Heart right ventricle (tissue), 16 donors: ENCODE measurements at regions of chr3 and their contacts with region 1.

Region 1: GRCh38 chr3:138426226-138426625 is 8.2 kb upstream of the ESYT3 start:
- DNase-seq: no peak
- ATAC-seq: peak in 2 of 8 donors; percentile 33 to 61
- H3K4me3 ChIP-seq: no peak overlapping the region
- H3K27ac ChIP-seq: no peak overlapping the region
- H3K4me1 ChIP-seq: no peaks in the 10 kb centered on the region
- H3K27me3 ChIP-seq: peaks cover 0 to 7% (median 0%) of the 10 kb centered on the region in 7 donors
- CTCF ChIP-seq: peak in 8 of 9 donors; percentile 23 to 63 (median 53)

Region 2: DNA sequence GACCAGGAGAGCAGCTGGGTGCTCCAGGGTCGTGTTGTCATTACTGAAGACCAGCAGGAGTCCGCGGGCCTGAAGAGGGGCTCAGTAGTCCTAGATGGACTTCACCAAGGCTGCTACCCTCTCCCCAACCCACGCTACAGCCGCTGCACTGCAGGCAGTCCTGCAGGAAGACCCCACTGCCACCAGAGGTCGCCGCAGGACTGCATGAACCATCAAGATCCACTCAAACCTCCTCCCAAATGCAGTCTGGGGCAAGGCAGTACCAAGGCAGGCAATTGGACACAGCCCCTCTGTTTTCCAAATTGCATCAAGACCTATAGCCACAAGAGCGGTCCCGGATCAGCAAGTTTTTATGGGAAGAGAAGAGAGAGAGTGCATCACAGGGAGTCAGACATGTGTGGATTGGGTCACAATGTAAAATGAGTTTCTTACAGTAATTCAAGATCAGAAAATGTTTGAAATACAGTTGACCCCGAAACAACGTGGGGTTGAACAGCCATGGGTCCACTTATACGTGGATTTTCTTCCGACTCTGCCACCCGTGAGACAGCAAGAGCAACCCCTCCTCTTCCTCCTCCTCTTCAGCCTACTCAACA is 357.5 kb before region 1 on chr3:
- intact Hi-C with region 1: loop called in 3 of 10 experiments (anchors 10 kb)
- DNase-seq: peak; percentile 74 to 80
- ATAC-seq: peak; percentile 83 to 94 (median 91)
- H3K4me3 ChIP-seq: no peak overlapping the region
- H3K27ac ChIP-seq: no peak overlapping the region
- H3K4me1 ChIP-seq: peaks cover 0 to 5% (median 0%) of the 10 kb centered on the region in 9 donors
- H3K27me3 ChIP-seq: no peaks in the 10 kb centered on the region
- CTCF ChIP-seq: peak; percentile 93 to 99 (median 97)

Region 3: GRCh38 chr3:138332472-138333076 is 93.7 kb before region 1 on chr3:
- intact Hi-C with region 1: loop called in 2 of 10 experiments (anchors 5 kb)
- DNase-seq: no peak
- ATAC-seq: no peak
- H3K4me3 ChIP-seq: no peak overlapping the region
- H3K27ac ChIP-seq: no peak overlapping the region
- H3K4me1 ChIP-seq: peaks cover 0 to 25% (median 8%) of the 10 kb centered on the region in 9 donors
- H3K27me3 ChIP-seq: peaks cover 0 to 6% (median 0%) of the 10 kb centered on the region in 7 donors
- CTCF ChIP-seq: peak; percentile 46 to 76 (median 71)

Region 4: GRCh38 chr3:138338811-138339210 is 87.4 kb before region 1 on chr3:
- intact Hi-C with region 1: loop called in 2 of 10 experiments (anchors 5 kb)
- DNase-seq: no peak
- ATAC-seq: peak in 3 of 8 donors; percentile 20 to 32 (median 22)
- H3K4me3 ChIP-seq: no peak overlapping the region
- H3K27ac ChIP-seq: peak overlapping the region in 1 of 10 donors; percentile 15
- H3K4me1 ChIP-seq: peaks cover 0 to 14% (median 0%) of the 10 kb centered on the region in 9 donors
- H3K27me3 ChIP-seq: no peaks in the 10 kb centered on the region
- CTCF ChIP-seq: no peak